Gastrocnemius medialis (tissue), 4 donors: ENCODE measurements at regions of chr17 and their contacts with region 1.

Region 1: GRCh38 chr17:36601303-36602029 is at the start of gene MRM1:
- DNase-seq: peak; percentile 86 to 92
- ATAC-seq: peak; percentile 92 to 93
- H3K4me3 ChIP-seq: peak within 1 kb of the TSS; percentile 82 to 100 (median 88)
- H3K27ac ChIP-seq: peak within 1 kb of the TSS; percentile 76 to 95 (median 90)
- H3K4me1 ChIP-seq: peaks cover 12 to 23% of the 10 kb centered on the region in 2 donors
- H3K27me3 ChIP-seq: no peaks in the 10 kb centered on the region
- CTCF ChIP-seq: peak in 1 of 5 experiments; percentile 21
- POLR2A ChIP-seq: peak; percentile 40 to 66
- total RNA-seq, gene MRM1: 8.8 to 13.9 (median 10.8) TPM

Region 2: GRCh38 chr17:36486204-36487194 is 115.0 kb before region 1 on chr17 and contains the start of gene ZNHIT3:
- in situ Hi-C with region 1: no loop called
- intact Hi-C with region 1: loop called (anchors 5 kb)
- DNase-seq: peak; percentile 84 to 88
- ATAC-seq: peak; percentile 96 to 97
- H3K4me3 ChIP-seq: peak within 1 kb of the TSS; percentile 80 to 92 (median 86)
- H3K27ac ChIP-seq: peak within 1 kb of the TSS; percentile 76 to 91 (median 82)
- H3K4me1 ChIP-seq: peaks cover 24 to 34% of the 10 kb centered on the region in 2 donors
- H3K27me3 ChIP-seq: peaks cover 0 to 3% (median 0%) of the 10 kb centered on the region in 3 donors
- CTCF ChIP-seq: no peak
- POLR2A ChIP-seq: peak; percentile 22 to 42
- total RNA-seq, gene ZNHIT3: 33.4 to 52.7 (median 39.3) TPM

Region 3: GRCh38 chr17:36705874-36706731 is 104.6 kb after region 1 on chr17:
- in situ Hi-C with region 1: no loop called
- intact Hi-C with region 1: loop called (anchors 10 kb)
- DNase-seq: peak in 1 of 2 donors; percentile 26
- ATAC-seq: no peak
- H3K4me3 ChIP-seq: no peak overlapping the region
- H3K27ac ChIP-seq: no peak overlapping the region
- H3K4me1 ChIP-seq: no peaks in the 10 kb centered on the region
- H3K27me3 ChIP-seq: peaks cover 10 to 35% (median 18%) of the 10 kb centered on the region in 3 donors
- CTCF ChIP-seq: peak in 4 of 5 experiments; percentile 22 to 52 (median 30)
- POLR2A ChIP-seq: no peak

Region 4: DNA sequence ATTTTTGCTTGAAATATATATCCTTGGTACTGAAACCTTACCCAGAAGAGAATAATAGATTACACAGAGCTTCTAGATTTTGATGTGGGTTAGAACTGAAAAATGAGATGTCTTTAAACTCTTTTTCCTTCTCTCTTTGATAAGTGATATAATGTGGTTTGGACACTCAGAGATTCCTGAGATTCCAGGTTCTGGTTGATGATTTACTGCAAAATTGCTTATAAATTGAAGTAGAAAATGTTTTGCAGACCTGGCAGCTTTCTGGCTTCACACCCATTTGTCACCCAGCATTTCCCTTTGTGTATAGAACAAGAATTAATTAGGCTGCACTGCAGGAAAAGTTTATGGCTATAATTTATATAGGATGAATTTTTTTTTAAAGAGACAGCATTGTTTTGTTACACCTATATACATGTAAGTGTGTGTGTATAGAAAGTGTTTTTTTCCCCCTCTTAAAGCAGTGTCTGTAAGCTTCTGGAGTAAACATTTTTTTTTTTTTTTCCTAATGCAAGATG is 370.8 kb after region 1 on chr17:
- in situ Hi-C with region 1: loop called in 1 of 4 experiments (anchors 25 kb)
- intact Hi-C with region 1: no loop called
- DNase-seq: no peak
- ATAC-seq: no peak
- H3K4me3 ChIP-seq: no peak overlapping the region
- H3K27ac ChIP-seq: no peak overlapping the region
- H3K4me1 ChIP-seq: peaks cover 0 to 4% of the 10 kb centered on the region in 2 donors
- H3K27me3 ChIP-seq: no peaks in the 10 kb centered on the region
- CTCF ChIP-seq: no peak
- POLR2A ChIP-seq: no peak

Region 5: GRCh38 chr17:37047631-37048104 is 446.2 kb after region 1 on chr17:
- in situ Hi-C with region 1: no loop called
- intact Hi-C with region 1: loop called (anchors 2 kb)
- DNase-seq: peak; percentile 54 to 73
- ATAC-seq: peak; percentile 62 to 91
- H3K4me3 ChIP-seq: no peak overlapping the region
- H3K27ac ChIP-seq: no peak overlapping the region
- H3K4me1 ChIP-seq: peaks cover 0 to 5% of the 10 kb centered on the region in 2 donors
- H3K27me3 ChIP-seq: no peaks in the 10 kb centered on the region
- CTCF ChIP-seq: peak; percentile 55 to 88 (median 80)
- POLR2A ChIP-seq: no peak